ENCODE measurements at regions of chr9 and their contacts with region 1.

Region 1: GRCh38 chr9:87725900-87726709 is at the start of gene CTSL:
- DNase-seq: peak; percentile 91
- ATAC-seq: peak; percentile 93
- H3K4me3 Mint-ChIP-seq: peak within 1 kb of the TSS; percentile 89
- H3K27ac Mint-ChIP-seq: peak within 1 kb of the TSS; percentile 95
- H3K4me1 Mint-ChIP-seq: peaks cover 11% of the 10 kb centered on the region
- H3K27me3 Mint-ChIP-seq: peaks cover 21% of the 10 kb centered on the region
- CTCF ChIP-seq: no peak
- total RNA-seq, gene CTSL: 33.0 to 39.7 TPM (median 33.4 TPM) in 3 replicates

Region 2: GRCh38 chr9:87684627-87685219 is 41.4 kb before region 1 on chr9:
- CTCF ChIA-PET with region 1: interaction called, 17 read pairs
- POLR2A ChIA-PET with region 1: no interaction called
- DNase-seq: peak; percentile 69
- ATAC-seq: peak; percentile 71
- H3K4me3 Mint-ChIP-seq: no peak overlapping the region
- H3K27ac Mint-ChIP-seq: peak overlapping the region; percentile 78; the same call in 1 of the 2 replicates
- H3K4me1 Mint-ChIP-seq: peaks cover 11% of the 10 kb centered on the region
- H3K27me3 Mint-ChIP-seq: no peaks in the 10 kb centered on the region
- CTCF ChIP-seq: peak; percentile 61; the same call in 1 of the 2 replicates

Region 3: GRCh38 chr9:87771316-87771974 is 45.3 kb after region 1 on chr9:
- CTCF ChIA-PET with region 1: interaction called, 11 read pairs
- POLR2A ChIA-PET with region 1: interaction called, 3 read pairs
- DNase-seq: peak; percentile 71
- ATAC-seq: peak; percentile 96
- H3K4me3 Mint-ChIP-seq: no peak overlapping the region
- H3K27ac Mint-ChIP-seq: no peak overlapping the region
- H3K4me1 Mint-ChIP-seq: peaks cover 27% of the 10 kb centered on the region
- H3K27me3 Mint-ChIP-seq: peaks cover 4% of the 10 kb centered on the region
- CTCF ChIP-seq: no peak

Region 4: GRCh38 chr9:87812375-87813118 is 86.4 kb after region 1 on chr9:
- CTCF ChIA-PET with region 1: interaction called, 17 read pairs
- POLR2A ChIA-PET with region 1: interaction called, 14 read pairs
- DNase-seq: peak; percentile 49
- ATAC-seq: peak; percentile 90; the same call in 1 of the 2 replicates
- H3K4me3 Mint-ChIP-seq: no peak overlapping the region
- H3K27ac Mint-ChIP-seq: no peak overlapping the region
- H3K4me1 Mint-ChIP-seq: no peaks in the 10 kb centered on the region
- H3K27me3 Mint-ChIP-seq: peaks cover 15% of the 10 kb centered on the region
- CTCF ChIP-seq: peak; percentile 76

Measured in WTC11 (cell line).